Upper lobe of right lung (tissue), 1 donor: ENCODE measurements at regions of chr7 and their contacts with region 1.

Region 1: GRCh38 chr7:44858161-44858560 is 10.3 kb upstream of the H2AZ2 start:
- DNase-seq: no peak
- ATAC-seq: no peak
- H3K4me3 ChIP-seq: no peak overlapping the region
- H3K27ac ChIP-seq: no peak overlapping the region
- H3K4me1 ChIP-seq: no peaks in the 10 kb centered on the region
- H3K27me3 ChIP-seq: no peaks in the 10 kb centered on the region
- CTCF ChIP-seq: no peak

Region 2: DNA sequence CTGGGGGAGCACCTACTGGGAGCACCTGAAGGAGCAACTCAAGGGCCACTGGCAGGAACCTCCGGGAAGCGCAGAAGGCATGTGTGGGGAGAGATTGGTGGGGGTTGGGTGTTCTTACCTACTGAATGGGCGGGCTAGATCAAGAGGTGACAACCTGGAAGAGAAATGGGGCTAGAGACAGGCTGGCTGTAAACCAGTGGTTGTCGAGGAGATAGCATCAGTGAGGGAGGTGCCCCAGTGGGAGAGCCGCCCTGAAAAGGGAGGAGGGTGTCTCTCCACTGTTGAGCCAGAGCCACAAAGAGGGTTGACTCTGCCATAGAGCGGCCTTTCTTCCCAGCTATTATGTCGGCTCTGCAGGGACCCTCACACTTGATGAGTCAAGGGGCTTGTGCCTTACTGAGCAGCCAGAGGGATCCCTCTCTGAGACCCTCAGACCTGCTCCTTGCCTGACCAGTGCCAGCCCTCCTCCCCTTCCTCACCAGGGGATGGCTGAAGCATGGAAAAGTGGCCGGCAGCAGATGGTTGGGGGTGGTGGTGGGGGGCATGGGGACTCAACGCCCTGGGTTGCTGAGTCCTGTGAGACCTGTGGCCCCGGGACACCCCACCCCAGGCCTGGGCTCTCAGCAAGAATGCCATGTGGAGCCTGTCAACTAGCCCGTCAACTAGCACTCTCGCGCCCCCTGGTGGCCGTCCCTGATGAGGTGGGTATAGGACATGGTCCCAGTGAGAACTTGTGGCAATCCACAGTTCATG is 63.6 kb after region 1 on chr7:
- intact Hi-C with region 1: loop called (anchors 5 kb)
- DNase-seq: peak; percentile 96
- ATAC-seq: peak; percentile 99
- H3K4me3 ChIP-seq: no peak overlapping the region
- H3K27ac ChIP-seq: no peak overlapping the region
- H3K4me1 ChIP-seq: no peaks in the 10 kb centered on the region
- H3K27me3 ChIP-seq: no peaks in the 10 kb centered on the region
- CTCF ChIP-seq: peak; percentile 91